Activated naive CD4-positive, alpha-beta T cell treated with anti-CD3 and anti-CD28 coated beads for 36 hours (primary cell): ENCODE measurements at regions of chr10 and their contacts with region 1.

Region 1: GRCh38 chr10:91006001-91006751 is 85.3 kb upstream of the ANKRD1 start:
- DNase-seq: peak; percentile 83
- H3K4me3 Mint-ChIP-seq: no peak overlapping the region
- H3K27ac Mint-ChIP-seq: no peak overlapping the region
- H3K4me1 Mint-ChIP-seq: peaks cover 31% of the 10 kb centered on the region
- H3K27me3 Mint-ChIP-seq: no peaks in the 10 kb centered on the region

Region 2: GRCh38 chr10:90245623-90246022 is 760.6 kb before region 1 on chr10:
- CTCF ChIA-PET with region 1: no interaction called
- intact Hi-C with region 1: no loop called
- DNase-seq: no peak
- H3K4me3 Mint-ChIP-seq: no peak overlapping the region
- H3K27ac Mint-ChIP-seq: no peak overlapping the region
- H3K4me1 Mint-ChIP-seq: no peaks in the 10 kb centered on the region
- H3K27me3 Mint-ChIP-seq: peaks cover 7% of the 10 kb centered on the region

Region 3: DNA sequence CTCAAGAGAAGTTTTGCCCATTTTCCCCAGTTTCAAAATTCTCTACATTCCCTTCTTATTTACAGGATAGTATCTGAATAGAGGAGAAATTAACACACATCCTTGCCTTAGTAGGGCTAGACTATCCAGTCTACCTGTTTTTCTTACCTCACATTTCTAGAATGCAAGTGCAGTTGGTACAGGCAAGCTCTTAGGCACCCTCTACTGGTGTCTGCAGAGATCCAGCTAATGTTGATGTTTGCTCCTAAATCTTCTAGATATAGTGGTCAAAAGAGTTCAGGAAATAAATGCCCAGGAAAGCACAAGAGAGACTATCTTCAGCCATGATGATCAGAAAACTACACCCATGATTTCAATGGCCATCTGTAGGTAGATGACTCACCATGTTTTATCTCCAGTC is 353.7 kb before region 1 on chr10:
- CTCF ChIA-PET with region 1: no interaction called
- intact Hi-C with region 1: no loop called
- DNase-seq: peak; percentile 4
- H3K4me3 Mint-ChIP-seq: no peak overlapping the region
- H3K27ac Mint-ChIP-seq: no peak overlapping the region
- H3K4me1 Mint-ChIP-seq: no peaks in the 10 kb centered on the region
- H3K27me3 Mint-ChIP-seq: peaks cover 5% of the 10 kb centered on the region

Region 4: GRCh38 chr10:90846746-90847145 is 159.4 kb before region 1 on chr10:
- CTCF ChIA-PET with region 1: no interaction called
- intact Hi-C with region 1: no loop called
- DNase-seq: no peak
- H3K4me3 Mint-ChIP-seq: no peak overlapping the region
- H3K27ac Mint-ChIP-seq: no peak overlapping the region
- H3K4me1 Mint-ChIP-seq: peaks cover 1% of the 10 kb centered on the region
- H3K27me3 Mint-ChIP-seq: peaks cover 27% of the 10 kb centered on the region

Region 5: DNA sequence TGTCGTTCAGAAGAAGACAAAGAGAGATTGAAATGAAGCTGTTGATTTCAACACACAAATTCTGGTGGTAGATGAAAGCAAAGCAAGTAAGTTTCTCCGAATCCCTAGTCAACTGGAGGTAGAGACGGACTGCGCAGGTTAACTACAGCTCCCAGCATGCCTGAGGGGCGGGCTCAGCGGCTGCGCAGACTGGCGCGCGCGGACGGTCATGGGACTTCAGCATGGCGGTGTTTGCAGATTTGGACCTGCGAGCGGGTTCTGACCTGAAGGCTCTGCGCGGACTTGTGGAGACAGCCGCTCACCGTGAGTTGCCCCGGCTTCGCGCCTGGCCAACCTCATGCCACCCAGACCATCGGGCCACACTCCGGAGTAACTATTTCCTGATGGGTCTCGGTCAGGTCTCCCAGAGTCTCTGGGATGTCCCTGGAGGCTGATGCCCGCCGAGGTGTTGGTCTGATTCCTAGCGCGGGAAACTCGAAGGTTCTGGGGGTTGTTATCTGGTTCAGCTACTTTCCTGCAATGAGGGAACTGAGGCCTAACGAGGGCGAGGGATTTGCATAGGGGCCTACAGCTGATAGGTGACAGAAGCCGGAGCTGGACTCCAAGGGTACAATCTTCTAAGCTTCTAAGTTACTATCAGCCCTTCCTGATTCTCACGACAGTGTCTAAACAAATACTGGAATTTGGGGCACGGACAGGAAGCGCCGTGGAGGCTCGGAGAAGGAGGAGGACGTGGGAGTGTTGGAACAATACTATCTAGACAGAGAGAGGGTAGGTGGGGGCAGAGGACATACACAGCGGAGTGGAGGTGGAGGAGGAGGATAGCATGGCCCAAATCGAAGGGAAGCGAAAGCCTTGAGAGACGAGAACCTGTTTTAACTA is 134.2 kb before region 1 on chr10 and contains the start of gene RPP30:
- CTCF ChIA-PET with region 1: no interaction called
- intact Hi-C with region 1: loop called (anchors 1 kb)
- DNase-seq: peak; percentile 89
- H3K4me3 Mint-ChIP-seq: peak within 1 kb of the TSS; percentile 96
- H3K27ac Mint-ChIP-seq: peak within 1 kb of the TSS; percentile 90
- H3K4me1 Mint-ChIP-seq: peaks cover 24% of the 10 kb centered on the region
- H3K27me3 Mint-ChIP-seq: peaks cover 14% of the 10 kb centered on the region
- total RNA-seq, gene RPP30: 74.7 to 75.8 TPM

Region 6: DNA sequence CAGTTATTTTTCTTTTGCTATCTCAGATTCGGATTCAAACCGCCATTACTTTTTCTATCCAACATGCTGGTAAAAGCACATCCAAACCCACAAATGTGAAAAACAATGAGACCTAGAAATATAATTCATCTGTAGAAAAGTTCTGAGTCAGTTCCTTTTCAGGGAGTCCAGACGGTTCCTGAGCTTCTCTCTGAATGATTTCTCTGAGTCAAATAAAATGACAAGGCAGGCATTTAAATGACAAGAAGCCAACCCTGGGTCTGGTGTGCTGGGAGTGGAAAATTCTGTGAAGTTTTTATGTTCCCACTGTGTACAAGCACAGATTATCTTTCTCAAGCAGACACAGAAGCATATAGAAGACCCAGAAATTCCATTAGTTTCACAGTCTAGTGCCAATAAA is 11.0 kb after region 1 on chr10:
- CTCF ChIA-PET with region 1: interaction called, 13 read pairs
- intact Hi-C with region 1: no loop called
- DNase-seq: no peak
- H3K4me3 Mint-ChIP-seq: no peak overlapping the region
- H3K27ac Mint-ChIP-seq: no peak overlapping the region
- H3K4me1 Mint-ChIP-seq: peaks cover 2% of the 10 kb centered on the region
- H3K27me3 Mint-ChIP-seq: peaks cover 3% of the 10 kb centered on the region

Region 7: DNA sequence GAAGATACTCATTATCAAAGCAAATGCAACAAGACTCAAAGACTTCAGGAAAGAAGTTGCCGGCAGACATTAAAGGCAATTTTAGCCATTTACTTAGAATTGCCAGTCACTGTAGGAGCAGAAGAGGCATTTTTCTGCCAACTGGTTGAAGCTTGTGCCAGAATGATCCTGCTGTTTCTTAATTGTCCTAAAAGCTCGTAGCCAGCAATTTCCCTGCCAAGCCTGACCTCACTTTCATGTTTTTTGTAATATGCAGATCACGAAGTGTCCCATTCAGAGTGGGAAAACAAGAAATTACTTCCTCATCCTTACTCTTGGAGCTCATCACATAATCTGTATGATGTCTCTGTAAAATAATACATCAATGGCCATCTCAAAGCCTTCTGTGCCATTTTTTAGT is 45.7 kb after region 1 on chr10:
- CTCF ChIA-PET with region 1: no interaction called
- intact Hi-C with region 1: no loop called
- DNase-seq: no peak
- H3K4me3 Mint-ChIP-seq: no peak overlapping the region
- H3K27ac Mint-ChIP-seq: no peak overlapping the region
- H3K4me1 Mint-ChIP-seq: no peaks in the 10 kb centered on the region
- H3K27me3 Mint-ChIP-seq: no peaks in the 10 kb centered on the region

Region 8: DNA sequence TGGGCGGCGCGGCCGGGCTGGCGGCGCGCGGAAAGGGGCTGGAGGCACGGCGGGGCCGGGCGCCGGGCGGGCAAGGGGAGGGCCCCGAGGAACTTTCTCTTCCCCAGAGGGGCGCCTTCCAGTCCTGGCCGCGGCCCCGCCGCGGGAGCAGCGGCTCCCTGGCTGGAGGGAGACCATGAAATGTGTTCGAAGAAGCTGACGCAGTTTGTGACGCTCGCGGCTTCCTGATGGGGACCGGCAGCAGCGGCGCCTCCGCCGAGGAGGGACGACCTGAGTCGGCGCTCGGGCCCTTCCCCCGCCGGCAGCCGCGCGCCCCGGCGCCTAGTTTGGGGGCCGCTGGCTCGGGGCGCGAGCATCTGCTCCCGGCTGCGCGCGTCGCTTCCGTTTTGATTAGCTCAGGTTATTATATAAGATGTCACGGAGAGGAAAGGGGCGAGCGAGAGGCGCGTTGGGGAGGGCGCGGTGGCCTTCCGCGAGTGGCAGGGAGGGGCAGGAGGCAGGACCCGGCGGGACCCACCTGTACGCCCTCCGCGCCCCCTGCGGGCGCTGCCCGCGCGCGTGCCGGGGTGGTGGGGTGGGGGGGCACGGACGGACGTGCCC is 157.2 kb after region 1 on chr10:
- CTCF ChIA-PET with region 1: interaction called, 6 read pairs
- intact Hi-C with region 1: loop called (anchors 2 kb)
- DNase-seq: peak; percentile 75
- H3K4me3 Mint-ChIP-seq: peak overlapping the region; percentile 80
- H3K27ac Mint-ChIP-seq: peak overlapping the region; percentile 78
- H3K4me1 Mint-ChIP-seq: peaks cover 33% of the 10 kb centered on the region
- H3K27me3 Mint-ChIP-seq: no peaks in the 10 kb centered on the region

Region 9: GRCh38 chr10:91251430-91252056 is 245.4 kb after region 1 on chr10:
- CTCF ChIA-PET with region 1: interaction called, 161 read pairs
- intact Hi-C with region 1: loop called (anchors 1 kb)
- DNase-seq: peak; percentile 70
- H3K4me3 Mint-ChIP-seq: no peak overlapping the region
- H3K27ac Mint-ChIP-seq: no peak overlapping the region
- H3K4me1 Mint-ChIP-seq: peaks cover 3% of the 10 kb centered on the region
- H3K27me3 Mint-ChIP-seq: no peaks in the 10 kb centered on the region

Region 10: GRCh38 chr10:91409869-91410637 is 403.9 kb after region 1 on chr10 and contains the start of gene HECTD2:
- CTCF ChIA-PET with region 1: interaction called, 3 read pairs
- intact Hi-C with region 1: loop called (anchors 1 kb)
- DNase-seq: peak; percentile 77
- H3K4me3 Mint-ChIP-seq: peak within 1 kb of the TSS; percentile 83
- H3K27ac Mint-ChIP-seq: peak within 1 kb of the TSS; percentile 88
- H3K4me1 Mint-ChIP-seq: peaks cover 15% of the 10 kb centered on the region
- H3K27me3 Mint-ChIP-seq: peaks cover 12% of the 10 kb centered on the region
- total RNA-seq, gene HECTD2: 2.3 to 3.1 TPM